Ascending aorta (tissue), 2 donors: ENCODE measurements at regions of chr12 and their contacts with region 1.

Region 1: GRCh38 chr12:57726151-57726883 is 12.2 kb downstream of the AGAP2 start:
- DNase-seq: peak in 1 of 2 donors; percentile 82
- H3K4me3 ChIP-seq: peak overlapping the region; percentile 76 to 77
- H3K27ac ChIP-seq: no peak overlapping the region
- H3K4me1 ChIP-seq: peaks cover 0 to 12% of the 10 kb centered on the region in 2 donors
- H3K27me3 ChIP-seq: peaks cover 3% of the 10 kb centered on the region
- CTCF ChIP-seq: peak; percentile 52 to 73 (median 58)

Region 2: DNA sequence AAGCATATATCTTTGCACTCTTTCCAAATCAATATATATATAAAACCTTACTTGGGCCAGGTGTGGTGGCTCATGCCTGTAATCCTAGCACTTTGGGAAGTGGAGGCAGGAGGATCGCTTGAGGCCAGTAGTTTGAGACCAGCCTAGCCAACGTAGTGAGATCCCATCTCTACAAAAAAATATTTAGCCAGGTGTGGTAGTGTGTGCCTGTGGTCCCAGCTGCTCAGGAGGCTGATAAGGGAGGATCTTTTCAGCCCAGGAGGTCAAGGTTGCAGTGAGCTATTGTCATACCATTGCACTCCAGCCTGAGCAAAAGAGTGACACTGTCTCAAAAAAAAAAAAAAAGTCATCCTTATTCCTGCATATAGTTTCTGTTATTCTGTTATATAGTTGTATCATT is 18.0 kb before region 1 on chr12:
- intact Hi-C with region 1: no loop called
- DNase-seq: no peak
- H3K4me3 ChIP-seq: no peak overlapping the region
- H3K27ac ChIP-seq: no peak overlapping the region
- H3K4me1 ChIP-seq: no peaks in the 10 kb centered on the region
- H3K27me3 ChIP-seq: no peaks in the 10 kb centered on the region
- CTCF ChIP-seq: no peak

Region 3: GRCh38 chr12:57744777-57745484 is 18.6 kb after region 1 on chr12 and contains the start of gene TSPAN31:
- intact Hi-C with region 1: loop called (anchors 2 kb)
- DNase-seq: peak; percentile 93 to 99
- H3K4me3 ChIP-seq: peak within 1 kb of the TSS; percentile 77 to 90
- H3K27ac ChIP-seq: peak within 1 kb of the TSS; percentile 98 to 100
- H3K4me1 ChIP-seq: peaks cover 0 to 7% of the 10 kb centered on the region in 2 donors
- H3K27me3 ChIP-seq: no peaks in the 10 kb centered on the region
- CTCF ChIP-seq: no peak
- total RNA-seq, gene TSPAN31: 42.3 TPM

Region 4: GRCh38 chr12:57765042-57765697 is 38.9 kb after region 1 on chr12:
- intact Hi-C with region 1: loop called (anchors 5 kb)
- DNase-seq: no peak
- H3K4me3 ChIP-seq: peak overlapping the region; percentile 43 to 63
- H3K27ac ChIP-seq: no peak overlapping the region
- H3K4me1 ChIP-seq: peaks cover 0 to 23% of the 10 kb centered on the region in 2 donors
- H3K27me3 ChIP-seq: no peaks in the 10 kb centered on the region
- CTCF ChIP-seq: peak in 1 of 3 experiments; percentile 47

Region 5: DNA sequence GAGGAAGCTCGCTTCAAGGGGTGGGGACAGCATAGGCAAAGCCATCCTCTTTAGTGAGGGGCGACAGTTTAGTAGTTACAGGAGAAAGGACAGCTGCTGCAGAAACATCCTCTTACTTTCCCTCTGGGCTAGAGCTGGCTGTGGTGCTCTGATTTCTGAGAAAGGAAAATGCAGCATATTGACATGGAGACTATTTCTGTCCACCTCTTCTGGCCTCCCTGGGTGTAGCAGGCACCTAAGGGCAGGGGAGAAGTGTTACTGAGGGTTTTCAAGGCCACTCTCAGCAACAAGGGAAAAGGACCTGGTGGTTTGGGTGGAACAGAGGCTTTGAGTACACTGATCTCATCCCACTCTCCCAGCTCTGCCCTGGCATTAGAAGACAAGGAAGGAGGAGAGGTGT is 160.2 kb after region 1 on chr12:
- intact Hi-C with region 1: no loop called
- DNase-seq: no peak
- H3K4me3 ChIP-seq: no peak overlapping the region
- H3K27ac ChIP-seq: peak overlapping the region; percentile 98 to 99
- H3K4me1 ChIP-seq: peaks cover 29 to 49% of the 10 kb centered on the region in 2 donors
- H3K27me3 ChIP-seq: no peaks in the 10 kb centered on the region
- CTCF ChIP-seq: no peak

Region 6: GRCh38 chr12:57993025-57993424 is 266.7 kb after region 1 on chr12:
- intact Hi-C with region 1: no loop called
- DNase-seq: no peak
- H3K4me3 ChIP-seq: no peak overlapping the region
- H3K27ac ChIP-seq: no peak overlapping the region
- H3K4me1 ChIP-seq: no peaks in the 10 kb centered on the region
- H3K27me3 ChIP-seq: no peaks in the 10 kb centered on the region
- CTCF ChIP-seq: no peak